ENCODE measurements at regions of chr18 and their contacts with region 1.

Region 1: DNA sequence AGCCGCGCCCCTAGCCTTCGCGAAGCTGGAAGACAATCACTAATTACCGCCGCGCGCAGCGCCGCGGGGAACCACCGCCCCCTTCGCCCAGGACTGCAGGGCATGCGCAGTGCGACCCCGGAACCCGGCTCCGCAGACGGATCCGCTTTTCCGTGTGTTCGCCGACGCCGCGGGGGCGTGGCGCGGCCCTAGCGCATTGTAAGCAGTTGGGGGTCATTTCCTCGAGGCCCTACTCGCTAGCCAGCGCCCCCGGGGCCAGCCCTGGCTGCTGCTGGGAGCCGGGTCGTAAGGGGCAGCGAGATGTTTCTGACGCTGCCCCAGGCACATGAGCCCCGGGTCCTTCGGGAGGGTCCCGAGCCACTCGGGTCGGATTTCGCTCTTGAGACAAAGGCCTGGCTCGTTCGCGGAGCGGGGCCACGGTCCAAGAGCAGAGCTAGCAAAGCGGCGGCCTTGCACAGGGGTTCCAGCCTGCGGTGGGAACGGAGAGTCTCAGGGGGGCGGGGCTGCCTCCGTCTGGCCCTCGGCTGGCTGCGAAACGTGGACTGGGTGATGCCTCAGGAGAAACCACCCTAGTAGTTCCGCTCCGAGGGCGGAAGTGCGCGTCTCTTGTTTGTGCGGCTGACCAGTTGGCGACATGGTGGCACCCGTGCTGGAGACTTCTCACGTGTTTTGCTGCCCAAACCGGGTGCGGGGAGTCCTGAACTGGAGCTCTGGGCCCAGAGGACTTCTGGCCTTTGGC is at the starts of genes ELP2 and SLC39A6:
- DNase-seq: peak; percentile 93 to 99 (median 96)

Region 2: GRCh38 chr18:36067055-36067957 is 62.2 kb before region 1 on chr18 and contains the start of gene RPRD1A:
- intact Hi-C with region 1: loop called (anchors 5 kb)
- DNase-seq: peak; percentile 96 to 100 (median 99)

Measured in head of caudate nucleus (tissue), 42 donors.